PC-3 (cell line): ENCODE measurements at regions of chr12 and their contacts with region 1.

Region 1: DNA sequence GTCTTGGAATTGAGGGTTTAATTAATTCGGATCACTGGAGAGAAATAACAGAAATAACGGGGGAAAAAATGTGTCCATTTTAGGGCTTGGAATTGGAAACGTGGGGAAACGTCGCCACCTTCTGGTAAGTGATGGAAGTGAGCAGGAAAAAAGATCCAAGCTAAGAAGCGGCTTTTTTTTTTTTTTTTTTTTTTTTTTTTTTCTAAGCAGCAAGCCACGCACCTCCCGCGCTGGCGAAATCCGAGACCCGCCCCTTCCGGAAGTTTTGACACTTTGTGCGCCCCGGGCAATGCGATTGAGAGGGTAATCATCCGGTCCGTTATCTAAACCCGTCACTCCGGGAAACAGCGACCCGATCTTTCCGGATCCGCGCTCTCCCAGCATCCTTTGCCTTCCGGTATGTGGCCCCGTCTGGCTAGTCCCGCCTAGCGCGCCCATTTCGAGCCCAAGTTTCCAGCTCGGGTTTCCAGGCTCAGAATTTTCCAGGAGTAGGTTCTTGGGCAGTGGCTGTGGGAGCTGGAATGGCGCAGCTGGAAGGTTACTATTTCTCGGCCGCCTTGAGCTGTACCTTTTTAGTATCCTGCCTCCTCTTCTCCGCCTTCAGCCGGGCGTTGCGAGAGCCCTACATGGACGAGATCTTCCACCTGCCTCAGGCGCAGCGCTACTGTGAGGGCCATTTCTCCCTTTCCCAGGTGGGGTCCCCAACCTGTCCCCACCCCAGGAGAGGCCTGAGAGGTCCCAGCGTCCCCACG is at the start of gene ALG10:
- DNase-seq: peak; percentile 98
- ATAC-seq: peak; percentile 99
- H3K4me3 ChIP-seq: peak within 1 kb of the TSS; percentile 98
- H3K27ac ChIP-seq: peak within 1 kb of the TSS; percentile 57
- H3K4me1 ChIP-seq: peaks cover 12% of the 10 kb centered on the region; the same call in 1 of the 2 replicates
- H3K27me3 ChIP-seq: no peaks in the 10 kb centered on the region
- CTCF ChIP-seq: peak; percentile 69
- total RNA-seq, gene ALG10: 15.7 TPM in 2 replicates

Region 2: GRCh38 chr12:33205981-33206380 is 816.3 kb before region 1 on chr12:
- CTCF ChIA-PET with region 1: no interaction called
- POLR2A ChIA-PET with region 1: no interaction called
- intact Hi-C with region 1: loop called (anchors 10 kb)
- DNase-seq: peak; percentile 56
- ATAC-seq: peak; percentile 87
- H3K4me3 ChIP-seq: peak overlapping the region; percentile 43; the same call in 1 of the 2 replicates
- H3K27ac ChIP-seq: peak overlapping the region; percentile 51
- H3K4me1 ChIP-seq: peaks cover 15% of the 10 kb centered on the region
- H3K27me3 ChIP-seq: no peaks in the 10 kb centered on the region
- CTCF ChIP-seq: no peak